RWPE1 (cell line): ENCODE measurements at regions of chr5 and their contacts with region 1.

Region 1: GRCh38 chr5:139422307-139422893 is 16.9 kb downstream of the DNAJC18 start:
- DNase-seq: peak; percentile 84
- H3K27ac ChIP-seq: no peak overlapping the region
- CTCF ChIP-seq: peak; percentile 97

Region 2: DNA sequence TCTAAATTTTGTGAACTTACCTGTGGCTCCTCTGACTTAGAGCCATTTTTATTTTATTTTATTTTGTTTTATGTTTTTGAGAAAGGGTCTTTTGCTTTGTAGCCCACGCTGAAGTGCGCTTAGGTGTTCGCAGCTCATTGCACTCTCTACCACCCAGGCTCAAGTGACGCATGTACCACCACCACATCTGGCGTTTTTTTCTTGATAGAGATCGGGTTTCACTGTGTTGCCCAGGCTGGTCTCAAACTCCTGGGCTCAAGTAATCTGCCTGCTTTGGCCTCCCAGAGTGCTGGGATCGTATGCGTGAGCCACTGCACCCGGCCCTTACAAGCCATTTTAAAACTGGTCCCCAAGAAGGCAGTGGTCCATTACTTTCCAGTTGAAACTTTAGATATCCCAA is 110.3 kb before region 1 on chr5:
- CTCF ChIA-PET with region 1: no interaction called
- POLR2A ChIA-PET with region 1: no interaction called
- DNase-seq: no peak
- H3K27ac ChIP-seq: 0 out of 2 replicates have a peak overlapping the region, but pooled peaks have one; percentile 5
- CTCF ChIP-seq: no peak

Region 3: GRCh38 chr5:139482050-139482889 is 59.9 kb after region 1 on chr5 and contains the start of gene STING1:
- CTCF ChIA-PET with region 1: interaction called, 21 read pairs
- POLR2A ChIA-PET with region 1: no interaction called
- DNase-seq: peak; percentile 97
- H3K27ac ChIP-seq: peak within 1 kb of the TSS; percentile 100
- CTCF ChIP-seq: no peak

Region 4: GRCh38 chr5:139517683-139518564 is 95.5 kb after region 1 on chr5:
- CTCF ChIA-PET with region 1: interaction called, 171 read pairs
- POLR2A ChIA-PET with region 1: interaction called, 3 read pairs
- DNase-seq: peak; percentile 95
- H3K27ac ChIP-seq: peak overlapping the region; percentile 70
- CTCF ChIP-seq: peak; percentile 98